Endothelial cell of umbilical vein (primary cell): ENCODE measurements at regions of chr4 and their contacts with region 1.

Region 1: DNA sequence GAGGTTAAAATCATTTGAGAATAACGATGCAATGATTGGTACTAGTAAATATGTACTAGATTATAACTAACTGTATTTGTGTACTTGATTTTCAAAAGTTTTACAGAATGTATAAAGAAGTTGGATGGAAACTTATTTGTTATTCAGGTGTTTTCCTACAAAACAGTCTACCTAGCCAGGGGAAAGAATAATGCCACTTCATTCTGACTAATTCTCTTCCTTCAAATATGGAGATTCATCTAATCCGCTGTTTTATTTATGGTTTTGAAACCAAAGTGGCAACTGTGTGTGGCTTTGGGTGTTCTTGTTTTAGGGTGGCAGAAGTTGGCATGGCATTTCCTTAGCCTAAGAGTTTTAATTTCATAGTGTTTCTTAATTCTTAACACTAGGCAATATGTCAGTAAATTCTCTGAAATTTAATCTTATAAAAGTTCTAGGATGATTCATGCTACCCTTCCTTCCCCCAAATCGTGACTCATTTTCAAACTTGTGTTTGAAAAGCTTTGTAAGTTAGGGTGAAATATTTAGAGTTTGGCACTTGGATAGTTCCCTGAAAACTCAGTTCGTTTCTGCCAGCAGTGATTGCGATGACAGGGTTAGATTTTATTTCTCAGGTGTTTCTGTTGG is 62.6 kb downstream of the DCLK2 start:
- DNase-seq: peak; percentile 80
- H3K4me3 ChIP-seq: peak overlapping the region in 1 of 3 experiments; percentile 21
- H3K27ac ChIP-seq: peak overlapping the region; percentile 66
- H3K4me1 ChIP-seq: peaks cover 23% of the 10 kb centered on the region
- H3K27me3 ChIP-seq: no peaks in the 10 kb centered on the region
- CTCF ChIP-seq: no peak
- POLR2A ChIP-seq: no peak

Region 2: GRCh38 chr4:150164956-150165629 is 24.2 kb after region 1 on chr4:
- CTCF ChIA-PET with region 1: interaction called, 4 read pairs
- POLR2A ChIA-PET with region 1: no interaction called
- dilution Hi-C with region 1: no loop called
- intact Hi-C with region 1: loop called (anchors 2 kb)
- DNase-seq: no peak
- H3K4me3 ChIP-seq: no peak overlapping the region
- H3K27ac ChIP-seq: no peak overlapping the region
- H3K4me1 ChIP-seq: peaks cover 11% of the 10 kb centered on the region
- H3K27me3 ChIP-seq: no peaks in the 10 kb centered on the region
- CTCF ChIP-seq: no peak
- POLR2A ChIP-seq: no peak

Region 3: DNA sequence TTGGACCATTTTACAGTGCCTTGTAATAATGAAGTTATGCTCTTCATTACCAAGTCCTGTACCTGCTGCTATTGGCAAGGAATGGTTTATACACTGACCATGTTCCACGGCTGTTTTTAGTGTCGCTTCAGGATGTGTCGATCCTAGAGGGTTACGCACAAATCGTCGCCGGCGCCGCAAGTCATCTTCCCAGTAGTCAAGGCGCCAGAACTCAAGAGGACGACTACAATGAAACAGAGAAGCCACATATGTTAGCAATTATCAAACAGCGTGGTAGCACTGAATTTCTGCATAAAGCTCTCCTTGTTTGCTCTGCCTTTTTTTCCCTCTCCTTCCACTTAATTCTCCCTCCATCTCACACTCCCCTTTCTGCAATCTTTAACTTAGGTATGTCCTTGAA is 458.0 kb after region 1 on chr4:
- CTCF ChIA-PET with region 1: no interaction called
- POLR2A ChIA-PET with region 1: no interaction called
- dilution Hi-C with region 1: no loop called
- intact Hi-C with region 1: no loop called
- DNase-seq: no peak
- H3K4me3 ChIP-seq: no peak overlapping the region
- H3K27ac ChIP-seq: no peak overlapping the region
- H3K4me1 ChIP-seq: no peaks in the 10 kb centered on the region
- H3K27me3 ChIP-seq: no peaks in the 10 kb centered on the region
- CTCF ChIP-seq: no peak
- POLR2A ChIP-seq: no peak